ENCODE measurements at regions of chr19 and their contacts with region 1.

Region 1: GRCh38 chr19:39247701-39248664 is 673 bp downstream of the IFNL4 start:
- DNase-seq: no peak
- ATAC-seq: no peak
- H3K4me3 ChIP-seq: no peak overlapping the region
- H3K27ac ChIP-seq: no peak overlapping the region
- H3K4me1 ChIP-seq: no peaks in the 10 kb centered on the region
- CTCF ChIP-seq: no peak
- EP300 ChIP-seq: no peak
- POLR2A ChIP-seq: no peak
- RAD21 ChIP-seq: no peak

Region 2: DNA sequence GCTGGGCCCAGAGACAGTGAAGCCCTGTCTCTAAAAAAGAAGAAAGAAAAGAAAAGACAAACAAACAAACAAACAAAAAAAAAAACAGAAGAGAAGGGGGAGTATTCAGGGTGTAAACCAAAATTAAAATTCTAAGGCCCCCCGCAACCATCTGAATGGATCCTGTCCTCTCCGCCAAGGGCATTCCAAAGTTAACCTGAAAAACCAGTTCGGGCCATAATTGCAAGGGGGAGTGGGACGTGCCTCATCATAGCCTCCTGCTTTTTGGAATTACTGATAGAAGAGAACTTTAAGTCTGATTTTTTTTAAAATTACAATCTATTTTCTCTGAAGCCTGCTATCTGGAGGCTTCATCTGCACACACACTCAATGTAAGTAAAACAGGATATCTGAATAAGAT is 14.5 kb after region 1 on chr19:
- CTCF ChIA-PET with region 1: interaction called, 17 read pairs
- POLR2A ChIA-PET with region 1: no interaction called
- DNase-seq: no peak
- ATAC-seq: no peak
- H3K4me3 ChIP-seq: no peak overlapping the region
- H3K27ac ChIP-seq: no peak overlapping the region
- H3K4me1 ChIP-seq: no peaks in the 10 kb centered on the region
- CTCF ChIP-seq: no peak
- EP300 ChIP-seq: no peak
- POLR2A ChIP-seq: no peak
- RAD21 ChIP-seq: no peak

Region 3: DNA sequence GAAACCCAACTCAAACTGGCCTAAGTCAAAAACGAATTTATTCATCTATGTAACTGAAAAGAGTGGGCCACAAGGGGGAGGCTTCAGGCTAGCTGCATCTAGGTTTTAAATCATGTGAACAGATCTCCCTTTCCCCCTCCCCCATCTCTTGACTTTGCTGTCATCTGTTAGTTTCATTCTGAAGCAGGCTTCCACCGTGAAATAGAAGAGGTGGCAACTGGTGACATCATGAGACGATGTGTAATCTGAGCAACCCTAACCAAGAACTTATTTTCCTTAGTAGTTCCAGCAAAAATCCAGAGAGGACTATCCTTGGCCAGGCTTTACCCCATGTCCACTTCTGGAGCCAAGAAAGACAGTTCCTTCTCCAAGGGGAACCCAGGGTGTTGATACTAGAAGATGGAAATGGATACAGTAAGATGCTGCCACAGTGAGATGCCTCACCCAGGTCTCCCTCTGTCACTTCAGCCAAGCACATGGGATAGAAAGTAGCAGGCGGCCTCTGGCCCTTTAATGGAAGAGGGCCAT is 103.6 kb after region 1 on chr19:
- CTCF ChIA-PET with region 1: no interaction called
- POLR2A ChIA-PET with region 1: no interaction called
- DNase-seq: peak in 1 of 2 experiments; percentile 42
- ATAC-seq: no peak
- H3K4me3 ChIP-seq: no peak overlapping the region
- H3K27ac ChIP-seq: no peak overlapping the region
- H3K4me1 ChIP-seq: peaks cover 6% of the 10 kb centered on the region; the same call in 1 of the 3 replicates
- CTCF ChIP-seq: no peak
- EP300 ChIP-seq: 0 out of 5 replicates have a peak, but pooled peaks of 1 of the 2 experiments have one; percentile 18
- POLR2A ChIP-seq: no peak
- RAD21 ChIP-seq: no peak